Heart left ventricle (tissue), 16 donors: ENCODE measurements at regions of chr10 and their contacts with region 1.

Region 1: GRCh38 chr10:27319752-27320561 is 79.4 kb upstream of the ACBD5 start:
- DNase-seq: peak; percentile 50 to 88 (median 71)
- ATAC-seq: peak; percentile 77 to 97 (median 92)
- H3K4me3 ChIP-seq: peak overlapping the region in 11 of 12 donors; percentile 26 to 61 (median 47)
- H3K27ac ChIP-seq: peak overlapping the region in 11 of 12 donors; percentile 14 to 92 (median 65)
- H3K4me1 ChIP-seq: peaks cover 0 to 16% (median 1%) of the 10 kb centered on the region in 12 donors
- H3K27me3 ChIP-seq: peaks cover 0 to 13% (median 0%) of the 10 kb centered on the region in 9 donors
- CTCF ChIP-seq: no peak
- POLR2A ChIP-seq: no peak

Region 2: DNA sequence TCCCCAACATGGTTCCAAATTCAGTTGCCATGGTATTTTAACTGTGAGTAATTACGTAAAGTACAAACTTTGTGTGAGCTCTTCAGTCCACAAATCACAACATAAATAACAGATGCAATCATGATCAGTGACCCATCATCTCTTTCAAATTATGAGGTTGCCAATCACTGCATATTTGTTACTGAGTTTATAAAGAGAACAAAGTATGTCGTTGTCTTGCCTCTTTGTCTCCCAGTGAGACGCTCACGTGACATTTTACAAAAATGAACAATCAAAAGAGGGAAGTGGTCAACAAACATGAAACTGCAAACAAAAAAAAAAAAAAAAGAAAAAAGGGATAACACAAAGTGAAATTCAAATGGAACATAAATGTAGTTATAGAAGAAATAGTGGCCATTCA is 745.2 kb before region 1 on chr10:
- intact Hi-C with region 1: loop called in 1 of 10 experiments (anchors 5 kb)
- DNase-seq: no peak
- ATAC-seq: no peak
- H3K4me3 ChIP-seq: no peak overlapping the region
- H3K27ac ChIP-seq: no peak overlapping the region
- H3K4me1 ChIP-seq: peaks cover 0 to 6% (median 0%) of the 10 kb centered on the region in 12 donors
- H3K27me3 ChIP-seq: peaks cover 0 to 5% (median 0%) of the 10 kb centered on the region in 9 donors
- CTCF ChIP-seq: no peak
- POLR2A ChIP-seq: no peak

Region 3: GRCh38 chr10:26621889-26622711 is 697.9 kb before region 1 on chr10:
- intact Hi-C with region 1: loop called in 3 of 10 experiments (anchors 5 to 10 kb)
- DNase-seq: peak in 4 of 5 donors; percentile 22 to 74 (median 46)
- ATAC-seq: peak in 3 of 4 donors; percentile 42 to 66 (median 62)
- H3K4me3 ChIP-seq: peak overlapping the region in 10 of 12 donors; percentile 7 to 55 (median 33)
- H3K27ac ChIP-seq: no peak overlapping the region
- H3K4me1 ChIP-seq: peaks cover 0 to 8% (median 0%) of the 10 kb centered on the region in 12 donors
- H3K27me3 ChIP-seq: peaks cover 3 to 51% (median 9%) of the 10 kb centered on the region in 9 donors
- CTCF ChIP-seq: no peak
- POLR2A ChIP-seq: no peak

Region 4: DNA sequence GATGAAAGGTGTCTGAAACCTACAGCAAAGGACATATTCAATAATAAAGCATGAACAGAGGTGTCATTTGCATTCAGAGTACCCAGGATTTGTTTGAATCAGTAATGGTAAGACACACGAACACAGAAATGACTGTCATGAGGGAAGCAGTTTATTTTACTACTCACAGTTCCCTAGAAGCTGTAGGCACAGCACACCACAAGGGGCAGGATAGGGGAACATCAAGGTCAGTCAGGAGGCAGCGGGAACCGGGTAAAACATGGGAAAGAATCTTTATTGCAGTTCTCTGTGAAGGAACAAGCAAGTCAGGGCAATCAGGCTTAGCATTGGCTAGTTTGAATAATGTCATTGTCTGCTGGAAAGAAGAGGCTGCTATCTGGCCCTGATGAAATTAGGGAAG is 692.6 kb before region 1 on chr10:
- intact Hi-C with region 1: loop called in 3 of 10 experiments (anchors 5 to 10 kb)
- DNase-seq: no peak
- ATAC-seq: no peak
- H3K4me3 ChIP-seq: no peak overlapping the region
- H3K27ac ChIP-seq: no peak overlapping the region
- H3K4me1 ChIP-seq: peaks cover 0 to 4% (median 0%) of the 10 kb centered on the region in 12 donors
- H3K27me3 ChIP-seq: peaks cover under 1 to 44% (median 9%) of the 10 kb centered on the region in 9 donors
- CTCF ChIP-seq: no peak
- POLR2A ChIP-seq: no peak

Region 5: GRCh38 chr10:27330074-27330473 is 10.1 kb after region 1 on chr10:
- intact Hi-C with region 1: no loop called
- DNase-seq: no peak
- ATAC-seq: no peak
- H3K4me3 ChIP-seq: no peak overlapping the region
- H3K27ac ChIP-seq: no peak overlapping the region
- H3K4me1 ChIP-seq: no peaks in the 10 kb centered on the region
- H3K27me3 ChIP-seq: no peaks in the 10 kb centered on the region
- CTCF ChIP-seq: no peak
- POLR2A ChIP-seq: no peak

Region 6: DNA sequence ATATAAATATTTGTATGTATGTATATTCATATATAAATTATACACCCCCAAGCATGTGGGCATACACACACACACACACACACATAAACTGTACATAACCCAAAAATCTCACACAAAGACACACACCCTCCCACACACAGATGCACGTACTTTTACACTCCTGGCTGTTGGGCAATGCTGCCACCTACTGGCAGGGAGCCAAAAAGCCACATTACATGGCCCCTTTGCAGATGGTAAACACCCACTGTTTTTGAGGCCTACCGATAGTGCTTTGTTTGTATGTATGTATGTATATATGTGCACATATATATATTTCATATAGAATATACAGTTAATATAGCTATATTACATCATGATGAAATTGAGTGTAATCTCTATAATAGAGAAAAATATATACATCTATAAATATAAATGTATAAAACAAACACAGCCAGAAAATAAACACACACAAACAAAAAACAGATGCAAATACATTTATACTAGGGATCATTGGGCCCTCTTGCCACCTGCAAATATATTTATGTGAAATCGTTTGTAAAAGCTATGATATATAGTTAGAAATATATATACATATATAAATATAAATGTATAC is 40.7 kb after region 1 on chr10:
- intact Hi-C with region 1: no loop called
- DNase-seq: peak; percentile 65 to 83 (median 67)
- ATAC-seq: peak; percentile 32 to 82 (median 74)
- H3K4me3 ChIP-seq: no peak overlapping the region
- H3K27ac ChIP-seq: no peak overlapping the region
- H3K4me1 ChIP-seq: no peaks in the 10 kb centered on the region
- H3K27me3 ChIP-seq: no peaks in the 10 kb centered on the region
- CTCF ChIP-seq: peak; percentile 60 to 83 (median 70)
- POLR2A ChIP-seq: no peak

Region 7: GRCh38 chr10:28160866-28161405 is 841.0 kb after region 1 on chr10:
- intact Hi-C with region 1: no loop called
- DNase-seq: no peak
- ATAC-seq: no peak
- H3K4me3 ChIP-seq: no peak overlapping the region
- H3K27ac ChIP-seq: no peak overlapping the region
- H3K4me1 ChIP-seq: no peaks in the 10 kb centered on the region
- H3K27me3 ChIP-seq: no peaks in the 10 kb centered on the region
- CTCF ChIP-seq: no peak
- POLR2A ChIP-seq: no peak